MCF 10A (cell line): ENCODE measurements at regions of chr7 and their contacts with region 1.

Region 1: DNA sequence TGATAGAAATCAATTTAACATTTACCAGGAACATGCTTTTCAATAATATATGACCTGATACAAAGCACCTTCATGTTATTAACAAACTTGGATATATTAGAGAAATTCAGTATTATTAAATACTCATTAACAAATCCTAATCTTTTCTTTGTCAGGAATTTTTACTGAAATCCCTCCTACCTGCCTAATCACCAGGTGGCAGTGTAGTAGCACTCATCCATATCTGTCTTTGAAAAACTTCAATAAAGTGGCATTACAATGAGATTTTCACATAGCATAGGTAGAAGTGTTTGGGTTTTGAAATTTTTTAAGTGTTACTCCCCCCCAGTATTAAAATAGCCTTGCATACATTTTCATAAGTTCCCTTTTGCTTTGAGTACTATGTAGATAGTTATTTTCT is 1246.6 kb upstream of the LRRN3 start:
- DNase-seq: peak; percentile 33
- H3K4me3 Mint-ChIP-seq: no peak overlapping the region
- H3K27ac Mint-ChIP-seq: no peak overlapping the region
- H3K4me1 Mint-ChIP-seq: no peaks in the 10 kb centered on the region
- H3K27me3 Mint-ChIP-seq: peaks cover 46% of the 10 kb centered on the region
- CTCF ChIP-seq: peak; percentile 61

Region 2: GRCh38 chr7:110090110-110090769 is 245.9 kb after region 1 on chr7:
- CTCF ChIA-PET with region 1: no interaction called
- POLR2A ChIA-PET with region 1: no interaction called
- intact Hi-C with region 1: loop called (anchors 10 kb)
- DNase-seq: peak; percentile 56
- H3K4me3 Mint-ChIP-seq: no peak overlapping the region
- H3K27ac Mint-ChIP-seq: no peak overlapping the region
- H3K4me1 Mint-ChIP-seq: no peaks in the 10 kb centered on the region
- H3K27me3 Mint-ChIP-seq: no peaks in the 10 kb centered on the region
- CTCF ChIP-seq: peak; percentile 60

Region 3: DNA sequence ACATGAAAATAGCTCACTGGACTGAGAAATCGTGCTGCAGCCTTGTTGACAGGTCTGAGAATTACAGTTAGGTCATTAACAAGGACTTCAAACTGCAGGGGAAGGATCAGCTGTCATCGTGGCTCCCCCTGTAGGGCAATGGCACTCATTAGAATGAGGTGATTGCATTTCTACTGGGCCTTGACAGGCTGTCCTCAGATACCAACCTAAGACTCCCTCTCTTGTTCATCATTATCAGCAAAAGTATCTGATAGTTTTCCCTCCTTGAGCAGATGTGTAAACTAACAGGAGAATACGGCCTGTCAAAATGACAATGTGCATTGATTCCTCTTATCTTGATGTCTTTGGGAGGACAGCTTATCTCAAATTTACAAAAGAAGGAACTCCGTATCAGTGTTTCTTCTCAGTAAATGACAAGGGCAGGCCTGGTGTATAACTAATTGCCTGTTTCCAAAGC is 598.0 kb after region 1 on chr7:
- CTCF ChIA-PET with region 1: interaction called, 3 read pairs
- POLR2A ChIA-PET with region 1: no interaction called
- intact Hi-C with region 1: loop called (anchors 1 kb)
- DNase-seq: peak; percentile 71
- H3K4me3 Mint-ChIP-seq: no peak overlapping the region
- H3K27ac Mint-ChIP-seq: no peak overlapping the region
- H3K4me1 Mint-ChIP-seq: no peaks in the 10 kb centered on the region
- H3K27me3 Mint-ChIP-seq: no peaks in the 10 kb centered on the region
- CTCF ChIP-seq: peak; percentile 77

Region 4: DNA sequence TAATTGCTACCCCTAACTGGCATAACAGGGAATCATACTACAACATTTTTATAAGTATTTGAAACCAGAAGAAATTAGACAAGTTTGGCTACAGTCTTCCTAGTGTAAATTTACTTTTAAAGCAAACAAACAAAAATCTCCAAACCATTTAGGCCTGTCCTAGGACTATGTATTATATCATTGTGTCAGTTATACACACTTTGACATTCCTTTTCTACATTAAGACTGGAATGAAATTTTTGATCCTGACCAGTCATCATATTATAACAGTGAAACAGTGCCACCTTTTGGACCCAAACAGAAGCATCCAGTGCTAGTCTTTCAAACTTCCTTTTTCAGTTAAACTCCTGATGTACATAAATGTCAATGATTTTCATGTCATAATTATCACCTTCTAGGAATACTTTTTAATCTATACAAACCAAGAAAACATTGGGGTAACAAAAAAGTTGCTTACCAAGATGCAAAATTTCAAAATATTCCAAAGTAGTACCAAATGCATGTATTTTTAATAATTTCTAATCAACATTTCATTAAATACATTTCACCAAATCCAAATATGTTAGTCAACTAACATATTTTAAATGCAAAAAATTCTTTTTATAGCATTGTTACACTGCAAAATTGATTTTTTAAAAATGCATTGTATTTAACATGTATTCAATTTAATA is 1642.2 kb after region 1 on chr7:
- CTCF ChIA-PET with region 1: no interaction called
- POLR2A ChIA-PET with region 1: no interaction called
- intact Hi-C with region 1: loop called (anchors 5 kb)
- DNase-seq: peak; percentile 64
- H3K4me3 Mint-ChIP-seq: no peak overlapping the region
- H3K27ac Mint-ChIP-seq: no peak overlapping the region
- H3K4me1 Mint-ChIP-seq: no peaks in the 10 kb centered on the region
- H3K27me3 Mint-ChIP-seq: no peaks in the 10 kb centered on the region
- CTCF ChIP-seq: peak; percentile 64